ENCODE measurements at regions of chr15 and their contacts with region 1.

Region 1: DNA sequence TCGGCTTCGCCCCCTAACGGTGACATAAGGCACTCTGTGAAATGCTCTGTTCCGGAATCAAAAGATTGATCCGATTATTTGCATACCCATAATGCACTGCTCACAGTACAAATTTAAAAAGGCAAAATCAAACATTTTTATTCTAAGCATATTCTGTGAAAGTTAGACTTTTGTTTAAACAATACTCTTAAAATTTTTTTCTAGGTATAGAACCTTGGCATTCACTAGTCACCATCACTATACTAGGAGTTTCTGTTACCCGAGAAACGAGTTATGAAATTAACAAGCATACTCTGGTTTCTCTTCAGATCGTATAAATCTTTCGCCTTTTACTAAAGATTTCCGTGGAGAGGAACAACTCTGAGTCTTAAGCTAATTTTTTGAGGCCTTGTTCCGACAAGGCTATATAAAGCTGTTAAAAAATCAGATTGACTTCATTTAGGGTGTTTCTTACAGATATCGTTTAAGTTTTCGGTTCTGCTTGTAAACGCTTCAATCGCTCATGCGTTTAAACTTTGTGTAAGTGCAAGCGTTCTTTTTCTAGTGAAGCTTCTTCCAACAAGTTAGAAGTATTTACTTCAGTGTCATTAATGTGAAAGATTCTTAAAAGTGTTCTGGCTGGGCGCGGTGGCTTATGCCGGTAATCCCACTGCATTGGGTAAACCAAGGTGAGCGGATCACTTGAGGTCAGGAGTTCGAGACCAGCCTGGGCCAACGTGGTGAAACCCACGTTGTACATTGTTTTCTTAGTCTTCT is at the start of gene RNU5B-1:
- DNase-seq: peak; percentile 40 to 94 (median 88)
- ATAC-seq: peak; percentile 89
- H3K4me3 ChIP-seq: peak within 1 kb of the TSS; percentile 60
- H3K4me3 Mint-ChIP-seq: peak within 1 kb of the TSS; percentile 91 to 99 (median 97)
- H3K27ac ChIP-seq: peak within 1 kb of the TSS; percentile 83
- H3K27ac Mint-ChIP-seq: peak within 1 kb of the TSS; percentile 96 to 100 (median 99)
- H3K4me1 ChIP-seq: peaks cover 0 to 9% of the 10 kb centered on the region in 2 donors
- H3K4me1 Mint-ChIP-seq: peaks cover 4 to 35% (median 31%) of the 10 kb centered on the region in 7 donors
- H3K27me3 ChIP-seq: no peaks in the 10 kb centered on the region
- H3K27me3 Mint-ChIP-seq: peaks cover 0 to 11% (median 0%) of the 10 kb centered on the region in 5 donors
- total RNA-seq, gene RNU5B-1: 18.9 TPM in 1 of 5 experiments, not detected in the others

Region 2: DNA sequence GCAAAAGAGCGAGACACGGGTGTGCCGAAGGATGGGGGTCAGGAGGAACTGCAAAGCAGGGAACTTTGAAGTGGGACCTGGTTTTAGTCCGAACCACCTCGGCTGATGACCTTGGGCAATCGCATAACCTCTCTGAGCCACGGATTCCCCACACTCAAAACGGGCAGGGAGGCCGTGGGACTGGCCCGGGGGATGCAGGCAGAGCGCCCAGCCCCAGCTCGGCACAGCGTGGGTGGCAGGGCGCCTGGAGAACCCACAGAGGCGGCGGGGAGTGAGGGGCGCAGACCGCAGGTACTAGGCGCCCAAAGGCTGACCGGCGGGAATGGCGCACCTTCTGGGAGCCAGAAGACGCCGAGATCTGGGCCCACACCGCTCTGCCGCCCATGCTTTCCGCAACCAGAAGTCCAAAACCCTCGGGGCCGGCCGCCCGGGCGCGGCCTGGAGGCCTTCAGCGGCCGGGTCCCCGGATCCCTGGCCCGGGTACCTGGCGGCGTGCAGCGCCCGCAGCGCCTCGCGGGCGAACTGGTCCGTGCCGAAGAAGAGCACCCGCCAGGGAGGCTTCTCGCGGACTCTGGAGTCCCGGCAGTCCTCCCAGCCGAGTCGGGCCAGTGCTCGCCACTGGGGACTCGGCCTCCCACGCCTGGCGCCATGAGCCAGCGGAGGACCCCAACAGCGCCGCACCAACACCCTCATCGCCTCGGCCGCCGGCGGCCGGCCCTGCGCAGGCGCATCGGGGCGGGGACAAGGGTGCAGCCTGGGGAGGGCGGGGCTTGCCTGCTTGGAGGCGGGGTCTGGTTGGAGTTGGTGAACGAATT is 275.4 kb before region 1 on chr15 and contains the start of gene MTFMT:
- CTCF ChIA-PET with region 1: no interaction called
- POLR2A ChIA-PET with region 1: interaction called, 5 read pairs
- intact Hi-C with region 1: loop called in 1 of 2 experiments (anchors 2 kb)
- DNase-seq: peak; percentile 72 to 93 (median 87)
- ATAC-seq: peak; percentile 96
- H3K4me3 ChIP-seq: peak within 1 kb of the TSS; percentile 90
- H3K4me3 Mint-ChIP-seq: peak within 1 kb of the TSS; percentile 83 to 98 (median 93)
- H3K27ac ChIP-seq: peak within 1 kb of the TSS; percentile 76
- H3K27ac Mint-ChIP-seq: peak within 1 kb of the TSS; percentile 21 to 95 (median 79)
- H3K4me1 ChIP-seq: peaks cover 9 to 10% of the 10 kb centered on the region in 2 donors
- H3K4me1 Mint-ChIP-seq: peaks cover 15 to 43% (median 33%) of the 10 kb centered on the region in 7 donors
- H3K27me3 ChIP-seq: no peaks in the 10 kb centered on the region
- H3K27me3 Mint-ChIP-seq: peaks cover 4 to 28% (median 11%) of the 10 kb centered on the region in 5 donors
- total RNA-seq, gene MTFMT: 7.1 to 24.8 (median 12.7) TPM

Region 3: GRCh38 chr15:65133548-65134200 is 170.9 kb before region 1 on chr15 and contains the start of gene PDCD7:
- CTCF ChIA-PET with region 1: no interaction called
- POLR2A ChIA-PET with region 1: interaction called, 6 read pairs
- intact Hi-C with region 1: loop called (anchors 1 to 2 kb)
- DNase-seq: peak; percentile 52 to 89 (median 81)
- ATAC-seq: peak; percentile 95
- H3K4me3 ChIP-seq: peak within 1 kb of the TSS; percentile 81
- H3K4me3 Mint-ChIP-seq: peak within 1 kb of the TSS; percentile 88 to 100 (median 92)
- H3K27ac ChIP-seq: peak within 1 kb of the TSS; percentile 94
- H3K27ac Mint-ChIP-seq: peak within 1 kb of the TSS; percentile 90 to 98 (median 96)
- H3K4me1 ChIP-seq: peaks cover 6 to 14% of the 10 kb centered on the region in 2 donors
- H3K4me1 Mint-ChIP-seq: peaks cover 20 to 43% (median 35%) of the 10 kb centered on the region in 7 donors
- H3K27me3 ChIP-seq: no peaks in the 10 kb centered on the region
- H3K27me3 Mint-ChIP-seq: peaks cover 0 to 2% (median 0%) of the 10 kb centered on the region in 5 donors
- total RNA-seq, gene PDCD7: 23.0 to 38.6 (median 36.9) TPM

Region 4: DNA sequence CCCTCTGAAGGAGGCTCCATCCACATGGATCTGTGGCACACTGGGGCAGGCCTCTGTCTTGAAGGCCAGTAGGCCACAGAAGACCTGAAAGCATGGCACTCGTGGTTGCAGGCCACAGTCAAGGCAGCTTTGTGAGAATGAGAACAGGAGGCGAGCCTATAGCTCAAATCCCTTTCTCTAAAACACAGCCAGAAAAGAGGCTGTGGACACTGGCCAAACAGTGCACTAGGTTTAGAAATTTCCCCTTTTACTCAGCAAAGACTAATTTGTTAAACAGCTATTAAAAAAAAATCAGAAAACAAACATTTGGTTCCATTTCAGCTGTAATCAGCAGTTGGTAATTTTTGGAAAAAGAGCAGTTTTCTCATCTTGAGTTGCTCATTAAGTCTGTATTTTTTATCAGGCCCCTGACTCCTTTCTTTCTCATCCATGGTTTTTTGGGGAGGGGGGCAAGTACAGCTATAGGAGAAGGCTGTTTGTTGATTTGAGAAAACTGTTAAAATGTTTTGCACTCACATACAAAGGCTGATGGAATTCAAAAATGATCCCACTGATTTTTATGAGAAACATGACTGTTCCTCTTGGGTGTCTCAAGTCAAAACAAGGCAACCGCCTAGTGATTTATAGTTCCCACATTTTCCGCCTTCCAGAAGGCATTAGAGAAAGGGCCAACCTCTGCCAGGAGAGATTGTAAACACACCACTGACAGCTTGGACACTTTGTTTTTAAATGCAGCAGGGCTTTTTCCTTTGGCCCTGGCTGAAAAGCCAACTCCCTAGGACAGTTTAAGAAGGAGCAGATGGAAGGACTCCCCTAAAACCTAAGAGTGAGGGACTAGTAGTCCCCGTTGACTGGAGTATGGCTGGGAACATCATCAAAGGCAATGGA is 45.9 kb before region 1 on chr15:
- CTCF ChIA-PET with region 1: no interaction called
- POLR2A ChIA-PET with region 1: no interaction called
- intact Hi-C with region 1: no loop called
- DNase-seq: no peak
- ATAC-seq: no peak
- H3K4me3 ChIP-seq: no peak overlapping the region
- H3K4me3 Mint-ChIP-seq: no peak overlapping the region
- H3K27ac ChIP-seq: no peak overlapping the region
- H3K27ac Mint-ChIP-seq: peak overlapping the region in 1 of 9 donors; percentile 37
- H3K4me1 ChIP-seq: no peaks in the 10 kb centered on the region
- H3K4me1 Mint-ChIP-seq: peaks cover 0 to 2% (median 0%) of the 10 kb centered on the region in 7 donors
- H3K27me3 ChIP-seq: no peaks in the 10 kb centered on the region
- H3K27me3 Mint-ChIP-seq: no peaks in the 10 kb centered on the region

Region 5: GRCh38 chr15:65318870-65319356 is 14.3 kb after region 1 on chr15:
- CTCF ChIA-PET with region 1: interaction called, 3 read pairs
- POLR2A ChIA-PET with region 1: interaction called, 11 read pairs
- intact Hi-C with region 1: loop called in 1 of 2 experiments (anchors 1 kb)
- DNase-seq: peak; percentile 57 to 76 (median 71)
- ATAC-seq: peak; percentile 97
- H3K4me3 ChIP-seq: no peak overlapping the region
- H3K4me3 Mint-ChIP-seq: no peak overlapping the region
- H3K27ac ChIP-seq: no peak overlapping the region
- H3K27ac Mint-ChIP-seq: peak overlapping the region in 1 of 9 donors; percentile 2
- H3K4me1 ChIP-seq: no peaks in the 10 kb centered on the region
- H3K4me1 Mint-ChIP-seq: peaks cover 0 to 3% (median 0%) of the 10 kb centered on the region in 7 donors
- H3K27me3 ChIP-seq: no peaks in the 10 kb centered on the region
- H3K27me3 Mint-ChIP-seq: peaks cover 0 to 31% (median 7%) of the 10 kb centered on the region in 5 donors

Region 6: GRCh38 chr15:65641768-65642475 is 337.4 kb after region 1 on chr15:
- CTCF ChIA-PET with region 1: no interaction called
- POLR2A ChIA-PET with region 1: no interaction called
- intact Hi-C with region 1: no loop called
- DNase-seq: no peak
- ATAC-seq: no peak
- H3K4me3 ChIP-seq: no peak overlapping the region
- H3K4me3 Mint-ChIP-seq: no peak overlapping the region
- H3K27ac ChIP-seq: no peak overlapping the region
- H3K27ac Mint-ChIP-seq: peak overlapping the region in 2 of 9 donors; percentile 17 to 44
- H3K4me1 ChIP-seq: no peaks in the 10 kb centered on the region
- H3K4me1 Mint-ChIP-seq: peaks cover 7 to 17% (median 10%) of the 10 kb centered on the region in 7 donors
- H3K27me3 ChIP-seq: no peaks in the 10 kb centered on the region
- H3K27me3 Mint-ChIP-seq: no peaks in the 10 kb centered on the region

Region 7: DNA sequence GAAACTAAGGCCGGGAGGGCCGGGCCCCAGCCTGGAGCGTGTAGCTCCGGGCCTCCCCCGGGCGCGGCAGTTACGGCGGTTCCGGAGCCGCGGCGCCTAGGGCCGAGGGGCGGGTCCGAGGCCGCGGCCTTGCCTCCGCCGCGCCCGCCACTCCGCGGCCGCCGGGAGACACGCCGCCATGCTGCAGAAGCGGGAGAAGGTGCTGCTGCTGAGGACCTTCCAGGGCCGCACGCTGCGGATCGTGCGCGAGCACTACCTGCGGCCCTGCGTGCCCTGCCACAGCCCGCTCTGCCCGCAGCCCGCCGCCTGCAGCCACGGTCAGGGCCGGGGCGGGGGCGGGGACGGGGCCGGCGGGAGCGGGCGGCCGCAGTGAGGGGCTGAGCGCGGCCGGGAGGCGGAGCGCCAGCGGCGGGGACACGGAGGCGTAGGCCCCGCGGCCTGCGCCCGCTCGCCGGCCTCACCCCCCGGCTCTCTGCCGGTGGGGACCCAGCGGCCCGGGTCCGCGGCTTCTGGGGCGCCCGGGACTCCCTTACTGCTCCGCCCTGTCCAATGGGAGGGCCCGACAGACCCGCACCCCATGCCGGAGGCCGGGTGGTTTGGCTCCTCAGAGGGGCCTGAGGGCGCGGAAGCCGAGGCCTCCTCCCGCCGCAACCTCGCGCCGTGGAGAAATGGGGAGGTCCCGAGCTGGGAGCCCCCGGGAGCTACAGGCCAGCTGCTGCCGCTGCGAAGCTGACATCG is 989.0 kb after region 1 on chr15 and contains the start of gene DIS3L:
- CTCF ChIA-PET with region 1: no interaction called
- POLR2A ChIA-PET with region 1: interaction called, 4 read pairs
- intact Hi-C with region 1: loop called in 1 of 2 experiments (anchors 10 kb)
- DNase-seq: peak; percentile 55 to 80 (median 69)
- ATAC-seq: peak; percentile 85
- H3K4me3 ChIP-seq: peak within 1 kb of the TSS; percentile 69
- H3K4me3 Mint-ChIP-seq: peak within 1 kb of the TSS; percentile 82 to 93 (median 89)
- H3K27ac ChIP-seq: peak within 1 kb of the TSS; percentile 84
- H3K27ac Mint-ChIP-seq: peak within 1 kb of the TSS; percentile 86 to 97 (median 96)
- H3K4me1 ChIP-seq: peaks cover 13 to 31% of the 10 kb centered on the region in 2 donors
- H3K4me1 Mint-ChIP-seq: peaks cover 20 to 57% (median 48%) of the 10 kb centered on the region in 7 donors
- H3K27me3 ChIP-seq: no peaks in the 10 kb centered on the region
- H3K27me3 Mint-ChIP-seq: peaks cover 0 to 4% (median 0%) of the 10 kb centered on the region in 5 donors
- total RNA-seq, gene DIS3L: 34.3 to 40.2 (median 38.1) TPM